A673 (cell line): ENCODE measurements at regions of chr16 and their contacts with region 1.

Region 1: GRCh38 chr16:51723036-51723724 is 572.1 kb upstream of the SALL1 start:
- DNase-seq: peak; percentile 14
- H3K4me3 ChIP-seq: no peak overlapping the region
- H3K27ac ChIP-seq: no peak overlapping the region
- H3K4me1 ChIP-seq: peaks cover 8% of the 10 kb centered on the region
- H3K27me3 ChIP-seq: no peaks in the 10 kb centered on the region
- CTCF ChIP-seq: no peak

Region 2: GRCh38 chr16:51577621-51578303 is 145.4 kb before region 1 on chr16:
- CTCF ChIA-PET with region 1: no interaction called
- POLR2A ChIA-PET with region 1: interaction called, 10 read pairs
- intact Hi-C with region 1: no loop called
- DNase-seq: peak; percentile 74
- H3K4me3 ChIP-seq: no peak overlapping the region
- H3K27ac ChIP-seq: no peak overlapping the region
- H3K4me1 ChIP-seq: peaks cover 6% of the 10 kb centered on the region
- H3K27me3 ChIP-seq: no peaks in the 10 kb centered on the region
- CTCF ChIP-seq: no peak